ENCODE measurements at regions of chr12 and their contacts with region 1.

Region 1: GRCh38 chr12:104011261-104011660 is 38.7 kb downstream of the GLT8D2 start:
- DNase-seq: peak; percentile 96
- ATAC-seq: peak; percentile 88
- H3K4me3 ChIP-seq: peak overlapping the region; percentile 9; the same call in 1 of the 2 replicates
- H3K27ac ChIP-seq: peak overlapping the region; percentile 95
- H3K4me1 ChIP-seq: peaks cover 13% of the 10 kb centered on the region
- H3K27me3 ChIP-seq: no peaks in the 10 kb centered on the region
- CTCF ChIP-seq: no peak
- POLR2A ChIP-seq: no peak
- RAD21 ChIP-seq: no peak

Region 2: GRCh38 chr12:103580026-103580425 is 431.2 kb before region 1 on chr12:
- CTCF ChIA-PET with region 1: no interaction called
- POLR2A ChIA-PET with region 1: no interaction called
- dilution Hi-C with region 1: no loop called
- in situ Hi-C with region 1: no loop called
- intact Hi-C with region 1: no loop called
- DNase-seq: no peak
- ATAC-seq: no peak
- H3K4me3 ChIP-seq: no peak overlapping the region
- H3K27ac ChIP-seq: no peak overlapping the region
- H3K4me1 ChIP-seq: no peaks in the 10 kb centered on the region
- H3K27me3 ChIP-seq: no peaks in the 10 kb centered on the region; the same call in 1 of the 2 replicates
- CTCF ChIP-seq: no peak
- POLR2A ChIP-seq: no peak
- RAD21 ChIP-seq: no peak

Region 3: GRCh38 chr12:104049903-104050356 is 38.7 kb after region 1 on chr12 and contains the start of gene GLT8D2:
- CTCF ChIA-PET with region 1: interaction called, 3 read pairs
- POLR2A ChIA-PET with region 1: no interaction called
- dilution Hi-C with region 1: no loop called
- in situ Hi-C with region 1: no loop called
- intact Hi-C with region 1: loop called (anchors 5 kb)
- DNase-seq: peak; percentile 86
- ATAC-seq: peak; percentile 86
- H3K4me3 ChIP-seq: peak within 1 kb of the TSS; percentile 47
- H3K27ac ChIP-seq: peak within 1 kb of the TSS; percentile 95
- H3K4me1 ChIP-seq: peaks cover 14% of the 10 kb centered on the region
- H3K27me3 ChIP-seq: no peaks in the 10 kb centered on the region
- CTCF ChIP-seq: no peak
- POLR2A ChIP-seq: no peak
- RAD21 ChIP-seq: no peak
- total RNA-seq, gene GLT8D2: 30.8 and 33.5 TPM in 2 replicates